ENCODE measurements at regions of chr2 and their contacts with region 1.

Region 1: DNA sequence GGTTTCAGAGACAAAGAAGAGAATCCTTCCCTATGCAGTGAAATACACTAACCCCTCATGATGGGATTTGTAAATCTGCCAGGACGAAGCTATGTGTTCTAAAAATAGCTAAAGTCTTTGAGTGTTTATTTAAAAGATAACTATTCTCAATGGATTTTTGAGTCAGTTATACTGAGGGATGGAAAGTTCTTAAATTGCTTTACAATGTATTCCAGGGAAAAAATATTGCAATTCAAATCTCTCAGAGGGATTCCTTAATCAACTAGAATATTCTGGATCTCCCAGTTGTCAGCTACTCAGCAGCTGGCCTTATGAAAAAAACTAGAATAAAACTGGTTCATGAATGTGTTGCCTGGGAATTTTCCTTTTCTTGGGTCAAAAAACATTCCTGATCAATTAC is 312.4 kb downstream of the PLCL1 start:
- DNase-seq: no peak
- ATAC-seq: peak in 7 of 8 donors; percentile 24 to 66 (median 48)
- H3K4me3 ChIP-seq: no peak overlapping the region
- H3K27ac ChIP-seq: peak overlapping the region in 5 of 10 donors; percentile 23 to 54 (median 48)
- H3K4me1 ChIP-seq: peaks cover 5 to 61% (median 38%) of the 10 kb centered on the region in 9 donors
- H3K27me3 ChIP-seq: no peaks in the 10 kb centered on the region
- CTCF ChIP-seq: no peak

Region 2: DNA sequence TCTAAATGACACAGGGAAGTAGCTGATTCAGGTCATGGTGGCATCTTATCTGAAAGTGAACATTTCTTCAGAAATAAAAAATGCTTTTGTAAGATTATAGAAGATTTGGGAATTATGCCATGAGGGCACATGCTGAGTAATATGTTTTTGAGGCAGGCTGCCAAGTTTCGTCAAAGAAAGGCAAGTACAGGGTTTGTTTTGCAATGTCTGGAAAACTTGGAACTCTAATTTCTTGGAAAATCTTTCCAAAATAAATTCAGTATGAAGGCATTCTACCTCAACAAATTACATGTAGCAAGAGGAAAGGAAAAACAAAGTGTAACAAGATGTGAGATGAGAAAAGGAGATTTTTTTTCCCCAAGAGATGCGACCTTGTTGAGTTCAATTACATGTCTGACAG is 144.7 kb before region 1 on chr2:
- intact Hi-C with region 1: loop called in 3 of 10 experiments (anchors 10 kb)
- DNase-seq: peak in 1 of 2 donors; percentile 30
- ATAC-seq: peak in 4 of 8 donors; percentile 18 to 46 (median 27)
- H3K4me3 ChIP-seq: no peak overlapping the region
- H3K27ac ChIP-seq: no peak overlapping the region
- H3K4me1 ChIP-seq: peaks cover 0 to 70% (median 21%) of the 10 kb centered on the region in 9 donors
- H3K27me3 ChIP-seq: no peaks in the 10 kb centered on the region
- CTCF ChIP-seq: no peak

Region 3: GRCh38 chr2:198053776-198054698 is 62.7 kb before region 1 on chr2:
- intact Hi-C with region 1: loop called in 2 of 10 experiments (anchors 5 to 10 kb)
- DNase-seq: no peak
- ATAC-seq: peak; percentile 33 to 78 (median 58)
- H3K4me3 ChIP-seq: no peak overlapping the region
- H3K27ac ChIP-seq: peak overlapping the region in 8 of 10 donors; percentile 7 to 65 (median 52)
- H3K4me1 ChIP-seq: peaks cover 3 to 54% (median 21%) of the 10 kb centered on the region in 9 donors
- H3K27me3 ChIP-seq: no peaks in the 10 kb centered on the region
- CTCF ChIP-seq: peak in 8 of 9 donors; percentile 13 to 58 (median 45)

Region 4: GRCh38 chr2:198066597-198066996 is 50.2 kb before region 1 on chr2:
- intact Hi-C with region 1: loop called in 1 of 10 experiments (anchors 5 kb)
- DNase-seq: peak in 1 of 2 donors; percentile 34
- ATAC-seq: peak in 3 of 8 donors; percentile 46 to 61 (median 49)
- H3K4me3 ChIP-seq: no peak overlapping the region
- H3K27ac ChIP-seq: peak overlapping the region in 4 of 10 donors; percentile 2 to 26 (median 11)
- H3K4me1 ChIP-seq: peaks cover 0 to 30% (median 4%) of the 10 kb centered on the region in 9 donors
- H3K27me3 ChIP-seq: no peaks in the 10 kb centered on the region
- CTCF ChIP-seq: no peak